Calu3 (cell line): ENCODE measurements at regions of chr2 and their contacts with region 1.

Region 1: GRCh38 chr2:197499594-197500526 is at the starts of genes HSPD1 and HSPE1:
- DNase-seq: peak; percentile 98
- H3K4me3 Mint-ChIP-seq: peak within 1 kb of the TSS; percentile 84
- H3K27ac Mint-ChIP-seq: peak within 1 kb of the TSS; percentile 95
- H3K4me1 Mint-ChIP-seq: peaks cover 17% of the 10 kb centered on the region
- H3K27me3 Mint-ChIP-seq: no peaks in the 10 kb centered on the region
- CTCF ChIP-seq: no peak
- total RNA-seq, gene HSPD1: 700 and 757 TPM in 2 replicates
- total RNA-seq, gene HSPE1: 380 and 454 TPM in 2 replicates

Region 2: DNA sequence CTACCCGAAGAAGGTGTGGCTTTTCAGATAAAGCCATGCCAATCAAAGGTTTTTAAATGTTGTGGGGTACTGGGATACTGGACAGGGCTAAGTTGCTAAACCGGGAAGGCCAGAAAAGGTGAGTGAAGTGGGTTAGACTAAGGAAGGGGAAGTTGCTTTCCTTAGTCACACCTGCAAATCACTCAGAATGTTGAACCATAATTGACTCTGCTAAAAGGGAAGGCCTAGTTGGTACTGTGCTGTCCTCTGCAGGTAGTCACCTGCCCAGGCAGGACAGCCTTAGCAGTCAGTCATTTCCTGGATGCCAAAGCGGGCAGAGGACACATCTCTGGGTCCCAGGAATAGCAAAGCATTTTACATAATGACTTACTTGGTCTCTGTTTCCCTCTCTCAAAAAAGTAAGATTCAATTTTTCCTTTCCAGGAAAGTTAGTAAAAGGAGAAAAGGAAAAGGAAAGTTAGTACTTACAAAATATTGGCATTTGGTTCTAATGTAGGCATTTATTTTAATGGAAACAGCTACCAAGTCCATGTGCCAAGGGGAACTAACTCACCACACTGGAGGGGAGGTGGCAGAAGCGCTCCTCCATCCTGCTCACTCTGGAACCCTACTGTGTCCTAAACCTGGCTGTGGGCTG is 115.3 kb after region 1 on chr2:
- CTCF ChIA-PET with region 1: no interaction called
- intact Hi-C with region 1: no loop called
- DNase-seq: peak; percentile 62
- H3K4me3 Mint-ChIP-seq: no peak overlapping the region
- H3K27ac Mint-ChIP-seq: peak overlapping the region; percentile 69
- H3K4me1 Mint-ChIP-seq: peaks cover 22% of the 10 kb centered on the region
- H3K27me3 Mint-ChIP-seq: no peaks in the 10 kb centered on the region
- CTCF ChIP-seq: no peak

Region 3: DNA sequence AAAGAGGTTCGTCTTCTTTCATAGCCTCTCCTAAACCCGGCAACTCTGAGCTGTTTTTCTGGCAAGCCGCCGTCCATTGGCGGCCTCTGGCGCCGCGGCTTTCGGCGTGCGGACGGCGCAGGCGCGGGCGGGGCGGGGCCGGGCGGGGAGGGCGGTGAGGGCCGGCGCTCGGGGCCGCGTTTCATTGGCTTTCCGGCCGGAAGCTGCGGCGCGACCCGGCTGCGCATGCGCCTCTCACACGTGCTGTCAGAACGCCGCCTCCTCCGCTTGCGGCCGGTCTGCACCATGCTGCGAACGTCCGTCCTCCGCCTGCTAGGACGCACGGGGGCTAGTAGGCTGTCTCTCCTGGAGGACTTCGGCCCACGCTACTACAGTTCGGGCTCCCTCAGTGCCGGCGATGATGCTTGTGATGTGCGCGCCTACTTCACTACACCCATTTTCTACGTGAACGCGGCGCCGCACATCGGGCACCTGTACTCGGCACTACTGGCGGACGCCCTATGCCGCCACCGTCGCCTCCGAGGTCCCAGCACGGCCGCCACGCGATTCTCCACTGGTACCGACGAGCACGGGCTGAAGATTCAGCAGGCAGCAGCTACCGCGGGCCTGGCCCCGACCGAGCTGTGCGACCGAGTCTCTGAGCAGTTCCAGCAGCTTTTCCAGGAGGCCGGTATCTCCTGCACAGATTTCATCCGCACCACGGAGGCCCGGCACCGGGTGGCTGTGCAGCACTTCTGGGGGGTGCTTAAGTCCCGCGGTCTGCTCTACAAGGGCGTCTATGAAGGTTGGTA is 205.5 kb after region 1 on chr2 and contains the start of gene MARS2:
- CTCF ChIA-PET with region 1: interaction called, 3 read pairs
- intact Hi-C with region 1: loop called (anchors 5 kb)
- DNase-seq: peak; percentile 92
- H3K4me3 Mint-ChIP-seq: peak within 1 kb of the TSS; percentile 89
- H3K27ac Mint-ChIP-seq: peak within 1 kb of the TSS; percentile 80
- H3K4me1 Mint-ChIP-seq: peaks cover 27% of the 10 kb centered on the region
- H3K27me3 Mint-ChIP-seq: no peaks in the 10 kb centered on the region
- CTCF ChIP-seq: no peak
- total RNA-seq, gene MARS2: 16.9 and 17.7 TPM in 2 replicates